PC-9 (cell line): ENCODE measurements at regions of chr4 and their contacts with region 1.

Region 1: GRCh38 chr4:37383579-37384229 is 139.2 kb downstream of the NWD2 start:
- DNase-seq: peak in 1 of 2 experiments; percentile 4
- H3K4me3 ChIP-seq: no peak overlapping the region
- H3K27ac ChIP-seq: no peak overlapping the region
- H3K4me1 ChIP-seq: no peaks in the 10 kb centered on the region
- H3K27me3 ChIP-seq: no peaks in the 10 kb centered on the region
- CTCF ChIP-seq: peak; percentile 74

Region 2: DNA sequence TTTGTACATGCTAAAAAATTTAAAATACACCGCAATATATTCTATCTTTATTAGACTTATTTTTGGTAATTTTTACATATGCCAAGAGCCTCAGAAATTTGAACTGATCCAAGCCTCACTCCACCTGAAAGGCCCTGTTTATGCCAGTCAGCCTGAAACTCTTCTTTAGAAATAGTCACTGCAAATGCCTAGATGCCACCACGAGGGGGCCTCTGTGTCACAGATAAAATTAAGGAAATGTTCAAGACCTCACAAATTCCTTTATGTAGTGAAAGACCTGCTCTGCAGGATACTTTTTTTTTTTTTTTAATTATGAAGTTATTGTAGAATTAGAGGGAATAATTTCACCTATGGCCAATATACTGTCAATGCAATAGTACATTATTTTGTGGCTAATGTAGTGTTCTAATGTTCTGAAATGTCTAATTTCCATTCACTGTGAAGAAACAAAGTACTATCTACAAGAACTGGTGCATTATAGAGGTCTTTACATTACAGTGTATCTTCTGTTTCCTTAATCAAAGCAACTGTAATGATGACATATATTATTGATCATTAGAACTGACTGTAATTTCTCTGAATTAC is 1032.5 kb before region 1 on chr4:
- CTCF ChIA-PET with region 1: no interaction called
- POLR2A ChIA-PET with region 1: no interaction called
- intact Hi-C with region 1: loop called (anchors 5 kb)
- DNase-seq: peak; percentile 50 to 52
- H3K4me3 ChIP-seq: no peak overlapping the region
- H3K27ac ChIP-seq: no peak overlapping the region
- H3K4me1 ChIP-seq: no peaks in the 10 kb centered on the region
- H3K27me3 ChIP-seq: no peaks in the 10 kb centered on the region
- CTCF ChIP-seq: peak; percentile 85

Region 3: GRCh38 chr4:36414248-36414647 is 969.5 kb before region 1 on chr4:
- CTCF ChIA-PET with region 1: no interaction called
- POLR2A ChIA-PET with region 1: no interaction called
- intact Hi-C with region 1: loop called (anchors 5 kb)
- DNase-seq: no peak
- H3K4me3 ChIP-seq: no peak overlapping the region
- H3K27ac ChIP-seq: no peak overlapping the region
- H3K4me1 ChIP-seq: no peaks in the 10 kb centered on the region
- H3K27me3 ChIP-seq: no peaks in the 10 kb centered on the region
- CTCF ChIP-seq: peak; percentile 61